ENCODE measurements at regions of chr7 and their contacts with region 1.

Region 1: DNA sequence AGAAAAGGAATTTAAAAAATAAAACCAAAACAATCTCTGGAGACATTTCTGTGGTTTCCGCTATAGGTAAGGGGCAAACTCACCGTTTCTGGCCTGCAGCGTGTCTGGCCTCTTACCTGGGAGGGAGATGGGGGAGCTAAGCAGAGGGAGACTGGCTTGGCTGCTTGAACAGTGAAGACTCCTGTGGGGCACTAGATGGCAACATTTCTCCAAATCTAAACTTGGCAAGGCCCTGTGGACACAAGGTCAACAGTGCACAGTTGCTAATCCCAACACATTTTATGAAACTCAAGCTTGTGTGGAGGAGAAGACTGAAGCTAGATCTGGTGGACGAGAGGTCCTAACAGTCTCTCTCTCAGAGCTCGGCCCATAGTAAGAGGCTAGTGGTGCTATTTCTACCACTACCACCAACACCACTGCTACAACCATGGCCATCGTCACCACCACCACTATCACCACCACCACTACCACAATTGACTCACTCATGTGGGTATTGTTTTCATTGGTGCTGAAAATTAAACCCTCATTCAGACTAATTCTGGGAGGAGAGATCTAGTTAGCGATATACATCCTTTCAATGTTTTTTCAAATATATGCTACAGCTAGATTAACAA is 28.4 kb upstream of the CDHR3 start:
- DNase-seq: peak in 1 of 2 experiments; percentile 38
- H3K4me3 ChIP-seq: no peak overlapping the region
- H3K27ac ChIP-seq: no peak overlapping the region
- H3K4me1 ChIP-seq: peaks cover 0 to 4% (median under 1%) of the 10 kb centered on the region in 4 experiments; a peak in 2 of 7 replicates
- H3K27me3 ChIP-seq: no peaks in the 10 kb centered on the region
- CTCF ChIP-seq: peak; percentile 48 to 80 (median 78)
- EP300 ChIP-seq: no peak
- POLR2A ChIP-seq: no peak
- RAD21 ChIP-seq: peak; percentile 91 to 94

Region 2: DNA sequence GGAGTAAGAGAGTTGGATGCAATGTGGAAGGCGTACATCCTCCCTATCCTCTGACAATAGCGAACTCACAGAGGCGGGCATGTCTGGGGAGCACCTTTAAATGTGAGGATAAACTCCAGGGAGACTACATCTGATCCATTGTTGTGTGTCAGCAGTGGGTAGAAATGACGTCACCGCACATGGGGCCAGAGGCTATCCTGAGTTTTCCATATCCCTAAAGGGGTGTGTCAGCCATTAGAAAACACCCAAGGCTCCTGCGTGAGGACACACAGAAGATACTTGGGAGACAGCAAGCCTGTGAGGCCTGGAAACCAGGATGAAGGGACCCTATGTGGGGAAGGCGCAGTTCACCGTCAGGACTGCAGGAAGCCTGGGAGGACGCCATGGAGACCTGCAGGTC is 11.2 kb after region 1 on chr7:
- CTCF ChIA-PET with region 1: interaction called, 12 read pairs
- POLR2A ChIA-PET with region 1: no interaction called
- DNase-seq: no peak
- H3K4me3 ChIP-seq: no peak overlapping the region
- H3K27ac ChIP-seq: no peak overlapping the region
- H3K4me1 ChIP-seq: 0 out of 7 replicates have a peak, but pooled peaks cover 0 to 3% (median 0%) of the 10 kb centered on the region in 4 experiments
- H3K27me3 ChIP-seq: no peaks in the 10 kb centered on the region
- CTCF ChIP-seq: no peak
- EP300 ChIP-seq: no peak
- POLR2A ChIP-seq: no peak
- RAD21 ChIP-seq: no peak

Region 3: DNA sequence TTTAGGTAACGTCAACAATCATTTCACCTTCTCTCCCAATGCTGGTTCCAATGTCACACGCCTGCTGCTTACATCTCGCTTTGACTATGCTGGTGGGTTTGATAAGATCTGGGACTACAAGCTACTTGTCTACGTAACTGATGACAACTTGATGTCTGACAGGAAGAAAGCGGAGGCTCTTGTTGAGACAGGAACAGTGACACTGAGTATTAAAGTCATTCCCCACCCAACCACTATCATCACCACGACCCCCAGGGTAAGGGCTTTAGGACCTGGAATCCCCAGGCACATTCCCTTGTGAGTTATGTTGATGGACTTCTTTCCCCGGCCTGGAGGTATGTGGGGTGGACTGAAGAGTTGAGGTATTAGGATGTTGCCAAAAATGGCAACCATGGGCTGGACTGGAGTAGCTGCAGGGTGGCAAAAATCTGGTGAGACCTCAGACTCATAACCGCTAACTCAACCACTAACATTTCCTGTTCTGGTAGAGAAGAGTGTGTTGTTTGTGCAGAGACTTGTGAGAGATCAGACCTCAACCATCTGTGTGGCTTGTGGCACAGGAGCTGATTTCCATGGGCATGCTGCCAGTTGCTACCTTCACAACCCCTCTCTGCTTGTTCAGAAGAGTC is 87.6 kb after region 1 on chr7:
- CTCF ChIA-PET with region 1: interaction called, 11 read pairs
- POLR2A ChIA-PET with region 1: no interaction called
- DNase-seq: no peak
- H3K4me3 ChIP-seq: no peak overlapping the region
- H3K27ac ChIP-seq: no peak overlapping the region
- H3K4me1 ChIP-seq: peaks cover 5 to 11% (median 6%) of the 10 kb centered on the region in 4 experiments; a peak in 6 of 7 replicates
- H3K27me3 ChIP-seq: no peaks in the 10 kb centered on the region
- CTCF ChIP-seq: no peak
- EP300 ChIP-seq: no peak
- POLR2A ChIP-seq: no peak
- RAD21 ChIP-seq: no peak

Region 4: GRCh38 chr7:106190589-106191330 is 256.1 kb after region 1 on chr7:
- CTCF ChIA-PET with region 1: no interaction called
- POLR2A ChIA-PET with region 1: no interaction called
- DNase-seq: no peak
- H3K4me3 ChIP-seq: no peak overlapping the region
- H3K27ac ChIP-seq: no peak overlapping the region
- H3K4me1 ChIP-seq: no peaks in the 10 kb centered on the region
- H3K27me3 ChIP-seq: no peaks in the 10 kb centered on the region
- CTCF ChIP-seq: no peak
- EP300 ChIP-seq: no peak
- POLR2A ChIP-seq: no peak
- RAD21 ChIP-seq: no peak